K562 (cell line): ENCODE measurements at regions of chr12 and their contacts with region 1.

Region 1: GRCh38 chr12:116492703-116493324 is 66.4 kb upstream of the MAP1LC3B2 start:
- DNase-seq: peak; percentile 76 to 89 (median 81)
- ATAC-seq: peak; percentile 95
- H3K4me3 ChIP-seq: no peak overlapping the region
- H3K27ac ChIP-seq: peak overlapping the region; percentile 83
- H3K4me1 ChIP-seq: peaks cover 5 to 6% of the 10 kb centered on the region in 2 experiments; a peak in 4 of 5 replicates
- H3K27me3 ChIP-seq: no peaks in the 10 kb centered on the region
- CTCF ChIP-seq: no peak
- EP300 ChIP-seq: peak; percentile 63
- POLR2A ChIP-seq: no peak
- RAD21 ChIP-seq: peak; percentile 18 to 31; a peak in 1 of 4 replicates

Region 2: DNA sequence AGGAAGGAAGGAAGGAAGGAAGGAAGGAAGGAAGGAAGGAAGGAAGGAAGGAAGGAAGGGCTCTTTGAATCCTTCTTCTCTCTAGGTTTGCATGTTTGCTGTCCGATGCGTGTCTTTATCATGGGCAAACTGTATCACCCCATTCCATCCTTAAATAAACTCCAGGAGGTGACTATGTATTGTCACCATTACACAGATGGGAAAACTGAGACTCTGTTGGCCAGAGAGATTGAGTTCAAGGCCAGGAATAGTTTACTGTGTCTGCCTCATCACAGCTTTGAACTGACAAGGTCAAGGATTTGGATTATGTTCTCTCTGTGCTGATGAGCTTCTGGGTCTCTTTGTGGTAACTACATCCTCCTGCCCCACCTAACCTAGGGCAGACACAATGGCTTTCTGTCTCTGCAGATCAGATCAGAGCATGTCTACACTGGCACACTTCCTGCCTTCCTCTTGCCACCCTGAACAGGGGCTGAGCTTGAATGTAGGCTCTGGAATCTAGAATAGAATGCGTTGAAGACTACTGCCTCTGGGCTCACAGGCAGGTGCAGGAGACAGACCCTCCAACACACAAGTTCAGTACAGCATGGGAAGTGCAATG is 12.5 kb before region 1 on chr12:
- CTCF ChIA-PET with region 1: no interaction called
- POLR2A ChIA-PET with region 1: interaction called, 11 read pairs
- in situ Hi-C with region 1: no loop called
- intact Hi-C with region 1: no loop called
- DNase-seq: no peak
- ATAC-seq: no peak
- H3K4me3 ChIP-seq: no peak overlapping the region
- H3K27ac ChIP-seq: no peak overlapping the region
- H3K4me1 ChIP-seq: peaks cover 0 to 7% of the 10 kb centered on the region in 2 experiments; a peak in 1 of 5 replicates
- H3K27me3 ChIP-seq: no peaks in the 10 kb centered on the region
- CTCF ChIP-seq: no peak
- EP300 ChIP-seq: no peak
- POLR2A ChIP-seq: no peak
- RAD21 ChIP-seq: no peak

Region 3: DNA sequence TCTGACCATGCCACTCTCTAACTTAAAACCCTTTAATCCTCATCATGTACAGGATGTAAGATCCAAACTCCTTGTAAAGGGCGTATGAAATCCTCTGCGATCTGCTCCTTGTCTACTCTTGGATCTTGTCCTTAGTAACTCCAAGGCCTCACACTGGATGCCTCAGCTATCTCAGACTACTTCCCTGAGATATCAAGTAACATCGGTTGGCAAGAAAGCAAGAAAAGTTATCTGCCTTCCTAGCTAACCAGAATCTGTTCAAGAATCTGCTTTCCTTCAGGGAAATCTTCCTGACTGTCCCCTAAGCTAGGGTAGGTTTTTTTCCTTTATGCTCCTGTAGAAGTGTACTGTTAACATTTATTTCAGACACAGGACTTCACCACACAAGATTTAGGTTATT is 1797.3 kb after region 1 on chr12:
- CTCF ChIA-PET with region 1: no interaction called
- POLR2A ChIA-PET with region 1: no interaction called
- in situ Hi-C with region 1: no loop called
- intact Hi-C with region 1: no loop called
- DNase-seq: no peak
- ATAC-seq: peak; percentile 25; the same call in 1 of the 3 replicates
- H3K4me3 ChIP-seq: no peak overlapping the region
- H3K27ac ChIP-seq: peak overlapping the region; percentile 30; the same call in 1 of the 3 replicates
- H3K4me1 ChIP-seq: peaks cover 10 to 14% of the 10 kb centered on the region in 2 experiments; a peak in 4 of 5 replicates
- H3K27me3 ChIP-seq: no peaks in the 10 kb centered on the region
- CTCF ChIP-seq: no peak
- EP300 ChIP-seq: no peak
- POLR2A ChIP-seq: no peak
- RAD21 ChIP-seq: no peak